ENCODE measurements at regions of chrX and their contacts with region 1.

Region 1: DNA sequence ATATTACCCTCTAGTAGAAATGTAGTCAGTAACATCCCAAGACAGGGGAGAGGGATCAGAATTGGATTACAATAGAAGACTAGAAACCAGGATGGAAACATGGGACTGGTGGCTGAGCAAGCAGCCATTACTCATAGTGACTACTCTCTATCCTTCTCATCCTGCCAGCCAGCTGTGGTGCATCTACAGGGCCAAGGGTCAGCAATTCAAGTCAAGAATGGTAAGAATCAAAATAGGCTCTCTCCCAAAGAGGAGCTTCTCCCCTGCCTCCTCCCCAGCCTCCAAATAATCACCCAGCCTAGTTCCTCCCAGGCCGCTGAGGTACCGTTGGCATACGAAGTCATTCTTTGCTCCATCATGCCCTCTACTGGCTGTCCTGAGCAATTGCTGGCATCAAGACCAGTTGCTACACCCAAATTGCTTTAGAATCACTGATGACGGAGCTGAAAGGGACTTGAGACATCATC is 19.4 kb downstream of the AWAT2 start:
- DNase-seq: peak; percentile 49
- H3K4me3 ChIP-seq: no peak overlapping the region
- H3K27ac ChIP-seq: no peak overlapping the region
- H3K4me1 ChIP-seq: peaks cover 34% of the 10 kb centered on the region
- H3K27me3 ChIP-seq: no peaks in the 10 kb centered on the region
- CTCF ChIP-seq: peak; percentile 71
- POLR2A ChIP-seq: no peak

Region 2: DNA sequence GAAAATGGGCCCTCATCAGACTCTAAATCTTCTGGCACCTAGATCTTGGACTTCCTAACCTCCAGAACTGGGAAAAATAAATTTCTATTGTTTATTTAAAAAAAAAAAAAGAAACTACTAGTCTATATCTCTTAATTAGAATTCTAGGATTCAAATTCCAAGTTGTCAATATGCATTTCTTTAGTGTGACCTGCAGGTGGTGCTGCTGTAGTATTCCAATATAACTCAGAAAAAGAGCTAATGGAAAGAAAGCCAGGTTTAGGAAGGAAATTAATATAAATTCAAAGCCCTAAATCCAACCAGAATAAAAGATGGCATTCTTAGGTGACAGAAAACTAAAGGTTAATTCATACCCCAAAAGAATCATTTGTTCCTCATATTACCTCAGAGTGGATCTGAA is 606.2 kb before region 1 on chrX:
- CTCF ChIA-PET with region 1: interaction called, 35 read pairs
- POLR2A ChIA-PET with region 1: no interaction called
- dilution Hi-C with region 1: no loop called
- intact Hi-C with region 1: loop called (anchors 5 kb)
- DNase-seq: peak; percentile 3
- H3K4me3 ChIP-seq: no peak overlapping the region
- H3K27ac ChIP-seq: no peak overlapping the region
- H3K4me1 ChIP-seq: no peaks in the 10 kb centered on the region
- H3K27me3 ChIP-seq: no peaks in the 10 kb centered on the region
- CTCF ChIP-seq: no peak
- POLR2A ChIP-seq: no peak

Region 3: GRCh38 chrX:69538321-69538876 is 491.9 kb before region 1 on chrX:
- CTCF ChIA-PET with region 1: interaction called, 69 read pairs
- POLR2A ChIA-PET with region 1: no interaction called
- dilution Hi-C with region 1: no loop called
- intact Hi-C with region 1: loop called (anchors 1 kb)
- DNase-seq: peak; percentile 46
- H3K4me3 ChIP-seq: peak overlapping the region in 2 of 3 experiments; percentile 15 to 22
- H3K27ac ChIP-seq: no peak overlapping the region
- H3K4me1 ChIP-seq: no peaks in the 10 kb centered on the region
- H3K27me3 ChIP-seq: no peaks in the 10 kb centered on the region
- CTCF ChIP-seq: peak; percentile 67 to 81
- POLR2A ChIP-seq: no peak

Region 4: DNA sequence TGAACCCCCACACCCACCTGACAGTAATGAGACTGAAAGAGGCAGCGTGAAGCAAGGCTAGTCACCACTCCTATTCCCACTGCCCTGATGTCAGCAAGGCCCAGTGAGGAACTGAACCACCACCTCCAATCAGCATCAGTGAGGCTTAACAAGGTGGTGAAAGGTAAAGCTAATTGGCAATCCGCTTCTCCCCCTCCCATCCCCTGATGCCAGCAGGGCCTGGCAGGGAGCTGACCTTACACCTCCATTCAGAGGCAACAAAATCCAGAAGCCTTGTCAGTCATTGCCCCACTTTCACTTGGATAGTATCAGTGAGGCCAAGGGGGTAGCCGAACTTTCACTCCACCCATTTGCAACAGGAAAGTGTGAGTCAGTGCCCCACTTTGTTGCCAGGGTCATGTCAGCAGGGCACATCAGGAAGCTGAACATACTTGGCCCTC is 41.4 kb before region 1 on chrX:
- CTCF ChIA-PET with region 1: interaction called, 9 read pairs
- POLR2A ChIA-PET with region 1: no interaction called
- dilution Hi-C with region 1: no loop called
- intact Hi-C with region 1: loop called (anchors 2 kb)
- DNase-seq: peak; percentile 77
- H3K4me3 ChIP-seq: no peak overlapping the region
- H3K27ac ChIP-seq: no peak overlapping the region
- H3K4me1 ChIP-seq: peaks cover 15% of the 10 kb centered on the region
- H3K27me3 ChIP-seq: no peaks in the 10 kb centered on the region
- CTCF ChIP-seq: no peak
- POLR2A ChIP-seq: no peak

Region 5: GRCh38 chrX:70096052-70096451 is 65.7 kb after region 1 on chrX:
- CTCF ChIA-PET with region 1: interaction called, 207 read pairs
- POLR2A ChIA-PET with region 1: no interaction called
- dilution Hi-C with region 1: no loop called
- intact Hi-C with region 1: loop called (anchors 1 kb)
- DNase-seq: peak; percentile 31
- H3K4me3 ChIP-seq: no peak overlapping the region
- H3K27ac ChIP-seq: no peak overlapping the region
- H3K4me1 ChIP-seq: no peaks in the 10 kb centered on the region
- H3K27me3 ChIP-seq: no peaks in the 10 kb centered on the region
- CTCF ChIP-seq: peak in 1 of 2 donors; percentile 26
- POLR2A ChIP-seq: no peak